Activated naive CD4-positive, alpha-beta T cell treated with anti-CD3 and anti-CD28 coated beads for 36 hours (primary cell): ENCODE measurements at regions of chr17 and their contacts with region 1.

Region 1: DNA sequence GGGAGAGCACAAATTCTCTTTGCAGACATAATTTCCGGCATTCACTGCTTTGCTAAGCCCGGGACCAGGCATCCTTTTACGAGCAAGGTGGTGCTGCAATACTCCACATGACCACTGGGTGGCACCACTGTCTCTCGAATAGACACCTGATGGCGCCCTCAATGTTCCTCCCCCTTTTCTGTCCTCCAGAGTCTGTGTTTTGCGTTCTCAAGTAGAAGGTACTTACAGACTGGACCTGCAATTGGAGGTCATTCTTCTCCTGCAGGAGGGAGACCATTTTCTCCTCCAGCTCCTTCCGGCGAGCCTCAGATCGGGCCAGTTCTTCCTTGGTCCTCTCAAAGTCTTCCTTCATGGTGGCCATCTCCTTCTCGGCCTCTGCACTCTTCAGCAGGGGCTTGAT is 45.2 kb downstream of the MYH13 start:
- DNase-seq: peak; percentile 83
- H3K4me3 Mint-ChIP-seq: no peak overlapping the region
- H3K27ac Mint-ChIP-seq: no peak overlapping the region
- H3K4me1 Mint-ChIP-seq: no peaks in the 10 kb centered on the region
- H3K27me3 Mint-ChIP-seq: peaks cover 3% of the 10 kb centered on the region

Region 2: GRCh38 chr17:10357768-10358167 is 30.1 kb after region 1 on chr17:
- CTCF ChIA-PET with region 1: interaction called, 3 read pairs
- intact Hi-C with region 1: loop called (anchors 1 kb)
- DNase-seq: peak; percentile 46
- H3K4me3 Mint-ChIP-seq: no peak overlapping the region
- H3K27ac Mint-ChIP-seq: no peak overlapping the region
- H3K4me1 Mint-ChIP-seq: no peaks in the 10 kb centered on the region
- H3K27me3 Mint-ChIP-seq: no peaks in the 10 kb centered on the region

Region 3: GRCh38 chr17:10394201-10394887 is 66.7 kb after region 1 on chr17:
- CTCF ChIA-PET with region 1: no interaction called
- intact Hi-C with region 1: no loop called
- DNase-seq: no peak
- H3K4me3 Mint-ChIP-seq: no peak overlapping the region
- H3K27ac Mint-ChIP-seq: no peak overlapping the region
- H3K4me1 Mint-ChIP-seq: no peaks in the 10 kb centered on the region
- H3K27me3 Mint-ChIP-seq: peaks cover 16% of the 10 kb centered on the region